ENCODE measurements at regions of chr16 and their contacts with region 1.

Region 1: GRCh38 chr16:66539623-66540469 is 10.1 kb downstream of the TK2 start:
- DNase-seq: peak in 1 of 35 experiments; percentile 37
- ATAC-seq: peak in 1 of 4 experiments; percentile 56
- H3K4me3 ChIP-seq: no peak overlapping the region
- H3K4me3 Mint-ChIP-seq: no peak overlapping the region
- H3K27ac ChIP-seq: no peak overlapping the region
- H3K27ac Mint-ChIP-seq: peak overlapping the region; percentile 75 to 79
- H3K4me1 ChIP-seq: peaks cover 3 to 12% of the 10 kb centered on the region in 2 experiments
- H3K4me1 Mint-ChIP-seq: peaks cover 15 to 38% (median 18%) of the 10 kb centered on the region in 3 donors
- H3K27me3 ChIP-seq: no peaks in the 10 kb centered on the region
- H3K27me3 Mint-ChIP-seq: no peaks in the 10 kb centered on the region

Region 2: GRCh38 chr16:66515596-66516510 is 24.0 kb before region 1 on chr16:
- CTCF ChIA-PET with region 1: interaction called, 4 to 11 read pairs
- POLR2A ChIA-PET with region 1: no interaction called
- DNase-seq: peak in 1 of 35 experiments; percentile 25
- ATAC-seq: no peak
- H3K4me3 ChIP-seq: no peak overlapping the region
- H3K4me3 Mint-ChIP-seq: peak overlapping the region; percentile 34 to 73 (median 62)
- H3K27ac ChIP-seq: peak overlapping the region; percentile 96
- H3K27ac Mint-ChIP-seq: peak overlapping the region; percentile 96 to 99
- H3K4me1 ChIP-seq: peaks cover 26 to 56% of the 10 kb centered on the region in 2 experiments
- H3K4me1 Mint-ChIP-seq: peaks cover 57 to 75% (median 61%) of the 10 kb centered on the region in 3 donors
- H3K27me3 ChIP-seq: no peaks in the 10 kb centered on the region
- H3K27me3 Mint-ChIP-seq: no peaks in the 10 kb centered on the region